Right cardiac atrium (tissue), 5 donors: ENCODE measurements at regions of chr11 and their contacts with region 1.

Region 1: DNA sequence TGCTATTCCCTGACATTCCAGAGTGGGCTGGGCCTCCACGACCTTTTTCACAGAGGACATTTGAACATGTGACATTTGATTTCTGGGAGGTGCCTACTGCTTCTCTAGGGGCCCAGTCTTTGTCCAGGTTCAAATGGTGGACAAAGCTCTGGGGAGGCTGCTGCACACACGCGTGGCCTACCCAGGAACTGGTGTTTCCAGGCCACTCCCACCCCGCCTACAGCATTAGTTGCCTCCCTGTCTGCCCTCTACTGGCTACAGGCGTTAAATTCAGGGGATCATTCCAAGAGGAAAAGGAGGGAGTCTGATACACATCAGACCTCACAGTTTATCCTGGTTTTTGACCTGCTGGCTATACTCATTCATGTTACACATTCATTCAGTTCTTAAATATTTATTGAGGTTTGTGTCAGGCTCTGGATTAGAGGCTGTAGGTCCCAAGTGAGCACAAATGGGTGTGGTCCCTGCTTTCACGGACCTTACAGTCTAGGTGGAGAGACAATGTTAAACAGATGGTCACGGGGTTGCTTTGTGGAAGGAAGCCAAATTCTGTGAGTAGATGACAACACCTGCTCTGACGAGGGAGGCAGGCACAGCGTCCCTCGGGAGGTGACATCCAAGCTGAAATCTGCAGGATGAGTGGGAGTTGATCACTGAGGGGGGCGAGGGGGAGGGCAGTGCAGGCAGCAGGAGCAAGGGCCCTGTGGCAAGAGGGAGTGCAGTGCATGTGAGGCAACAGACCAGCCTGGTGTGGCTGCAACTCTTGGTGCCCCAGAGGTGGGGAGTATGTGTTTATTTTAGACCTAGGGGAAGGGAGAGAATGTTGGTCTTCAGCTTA is 11.8 kb downstream of the TUB start:
- DNase-seq: peak; percentile 76 to 89 (median 78)
- ATAC-seq: peak; percentile 69 to 80
- H3K4me3 ChIP-seq: no peak overlapping the region
- H3K27ac ChIP-seq: no peak overlapping the region
- H3K4me1 ChIP-seq: no peaks in the 10 kb centered on the region
- H3K27me3 ChIP-seq: no peaks in the 10 kb centered on the region

Region 2: DNA sequence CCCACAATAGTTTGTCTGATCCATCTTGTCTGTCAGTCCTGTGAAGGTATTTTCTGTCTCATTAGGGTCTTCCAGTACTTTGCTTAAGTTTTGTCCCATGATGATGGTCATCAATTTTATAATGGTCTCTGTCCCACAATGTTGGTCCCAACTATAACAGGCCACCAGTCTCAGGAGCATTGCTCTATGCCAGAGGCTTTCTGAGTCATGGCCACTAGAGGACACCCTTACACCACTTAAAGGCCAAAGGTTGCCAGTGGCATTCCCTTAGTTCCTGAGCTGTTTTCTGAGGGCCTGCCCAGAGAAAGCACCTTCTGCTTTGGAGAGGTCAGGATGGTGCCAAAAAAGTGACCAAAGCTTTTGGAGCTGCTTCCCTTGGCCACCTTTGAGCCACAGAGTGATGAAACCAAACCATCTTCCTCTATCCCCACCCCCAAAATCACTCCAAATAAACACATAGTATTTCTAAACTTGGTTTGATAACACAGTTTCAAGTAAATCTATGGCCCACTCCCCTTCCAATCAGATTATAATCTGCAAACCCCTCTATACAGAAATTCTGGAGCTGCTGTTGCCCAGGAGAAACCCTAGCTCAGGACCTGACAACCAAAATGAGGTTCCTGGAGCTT is 86.3 kb before region 1 on chr11:
- intact Hi-C with region 1: loop called (anchors 2 to 5 kb)
- DNase-seq: peak in 2 of 3 donors; percentile 31 to 55
- ATAC-seq: peak; percentile 85 to 86
- H3K4me3 ChIP-seq: no peak overlapping the region
- H3K27ac ChIP-seq: no peak overlapping the region
- H3K4me1 ChIP-seq: no peaks in the 10 kb centered on the region
- H3K27me3 ChIP-seq: no peaks in the 10 kb centered on the region

Region 3: DNA sequence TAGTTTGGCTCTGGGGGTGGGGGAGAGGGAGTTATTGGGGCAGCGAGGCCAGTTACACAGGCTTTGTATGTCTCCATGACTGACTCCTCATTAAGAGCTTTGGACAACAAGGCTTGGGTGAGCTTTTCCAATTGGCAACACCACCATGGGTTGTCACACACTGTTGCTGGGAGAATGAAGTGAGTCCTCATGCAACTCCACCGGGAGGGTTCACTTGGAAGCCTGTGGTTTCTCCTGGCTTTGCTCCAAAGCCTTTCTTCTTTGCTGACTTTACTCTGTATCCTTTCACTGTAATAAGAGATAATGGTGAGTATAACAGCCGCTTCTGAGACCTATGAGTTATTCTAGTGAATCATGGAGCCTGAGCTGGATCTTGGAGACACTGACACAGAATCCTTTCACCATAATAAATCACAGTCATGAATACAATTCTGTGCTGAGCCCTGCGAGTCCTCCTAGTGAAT is 80.8 kb before region 1 on chr11:
- intact Hi-C with region 1: loop called (anchors 2 to 5 kb)
- DNase-seq: no peak
- ATAC-seq: peak in 1 of 2 donors; percentile 22
- H3K4me3 ChIP-seq: no peak overlapping the region
- H3K27ac ChIP-seq: no peak overlapping the region
- H3K4me1 ChIP-seq: no peaks in the 10 kb centered on the region
- H3K27me3 ChIP-seq: no peaks in the 10 kb centered on the region

Region 4: DNA sequence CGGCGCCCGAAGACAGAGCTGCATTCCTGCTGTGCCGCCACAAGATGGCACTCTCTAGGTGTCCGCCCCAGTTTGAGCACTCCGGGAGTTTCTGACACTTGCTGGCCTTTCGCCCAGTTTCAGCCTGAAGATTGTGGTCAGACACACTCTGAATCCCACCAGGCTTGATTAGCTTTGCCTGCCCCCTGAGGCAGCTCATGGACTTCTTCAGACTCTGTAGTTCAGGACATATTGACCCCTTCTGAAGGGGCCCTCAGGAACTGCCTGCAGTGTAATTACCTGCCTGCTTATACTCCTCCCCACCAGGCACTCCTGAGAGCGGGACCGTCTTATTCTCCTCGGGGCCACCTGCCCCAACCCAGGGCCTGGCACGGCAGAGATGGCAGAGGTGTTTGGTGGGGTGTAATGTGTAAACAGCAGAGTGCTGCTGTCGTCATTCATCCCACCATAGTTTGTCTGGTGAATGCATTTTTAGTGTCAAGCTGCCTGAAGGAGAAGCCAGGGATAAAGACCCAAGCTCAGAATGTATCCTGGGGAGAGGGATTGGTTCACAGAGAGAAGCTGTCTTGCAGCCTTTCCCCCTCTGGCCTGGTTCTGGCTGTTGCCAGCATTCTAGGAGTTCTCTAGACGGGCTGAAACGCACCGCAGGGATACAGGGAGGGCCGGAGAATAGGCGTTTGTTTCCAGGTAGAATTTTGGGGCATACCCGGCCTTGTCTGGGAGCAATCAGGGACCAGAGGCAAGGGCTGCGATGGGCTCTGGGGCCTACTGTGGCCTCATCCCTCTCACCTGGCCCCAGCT is 59.3 kb before region 1 on chr11:
- intact Hi-C with region 1: loop called in 2 of 4 experiments (anchors 2 to 5 kb)
- DNase-seq: peak; percentile 87 to 94 (median 89)
- ATAC-seq: peak; percentile 62 to 67
- H3K4me3 ChIP-seq: no peak overlapping the region
- H3K27ac ChIP-seq: no peak overlapping the region
- H3K4me1 ChIP-seq: peaks cover 8% of the 10 kb centered on the region
- H3K27me3 ChIP-seq: no peaks in the 10 kb centered on the region

Region 5: GRCh38 chr11:8056810-8057463 is 35.9 kb before region 1 on chr11:
- intact Hi-C with region 1: no loop called
- DNase-seq: peak; percentile 66 to 87 (median 74)
- ATAC-seq: peak; percentile 78 to 79
- H3K4me3 ChIP-seq: no peak overlapping the region
- H3K27ac ChIP-seq: peak overlapping the region; percentile 1
- H3K4me1 ChIP-seq: peaks cover 4% of the 10 kb centered on the region
- H3K27me3 ChIP-seq: no peaks in the 10 kb centered on the region

Region 6: DNA sequence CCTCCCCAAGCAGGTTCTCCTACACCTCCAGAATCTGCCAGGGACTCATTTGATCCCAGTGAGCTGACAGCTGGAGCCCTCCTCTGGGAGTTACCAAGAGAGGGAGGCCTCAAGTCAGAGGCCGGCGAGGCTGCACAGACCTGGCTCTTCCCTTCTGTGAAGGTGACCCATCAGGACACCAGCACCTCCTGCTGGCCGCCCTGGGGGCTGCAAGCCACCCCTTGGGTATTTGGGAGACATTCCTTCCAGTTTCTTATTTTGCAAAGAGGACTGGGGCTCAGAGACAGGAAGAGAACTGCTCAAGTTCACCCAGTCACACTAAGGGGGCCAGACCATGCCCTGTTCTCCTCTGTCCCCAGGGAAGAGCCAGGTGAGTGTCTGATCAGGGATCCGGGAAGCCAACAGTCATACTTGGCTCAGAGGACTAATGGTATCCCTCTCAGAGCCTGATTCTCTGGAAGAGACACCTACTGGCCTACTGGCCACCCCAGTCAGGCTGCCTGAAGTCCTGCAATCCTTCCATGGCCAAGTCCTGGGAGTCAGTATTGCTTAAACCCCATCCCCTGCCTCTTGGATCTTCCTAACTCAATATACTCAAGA is 116.5 kb after region 1 on chr11:
- intact Hi-C with region 1: no loop called
- DNase-seq: peak in 2 of 3 donors; percentile 79 to 80
- ATAC-seq: no peak
- H3K4me3 ChIP-seq: no peak overlapping the region
- H3K27ac ChIP-seq: no peak overlapping the region
- H3K4me1 ChIP-seq: peaks cover 5% of the 10 kb centered on the region
- H3K27me3 ChIP-seq: no peaks in the 10 kb centered on the region